K562 (cell line): ENCODE measurements at regions of chr11 and their contacts with region 1.

Region 1: DNA sequence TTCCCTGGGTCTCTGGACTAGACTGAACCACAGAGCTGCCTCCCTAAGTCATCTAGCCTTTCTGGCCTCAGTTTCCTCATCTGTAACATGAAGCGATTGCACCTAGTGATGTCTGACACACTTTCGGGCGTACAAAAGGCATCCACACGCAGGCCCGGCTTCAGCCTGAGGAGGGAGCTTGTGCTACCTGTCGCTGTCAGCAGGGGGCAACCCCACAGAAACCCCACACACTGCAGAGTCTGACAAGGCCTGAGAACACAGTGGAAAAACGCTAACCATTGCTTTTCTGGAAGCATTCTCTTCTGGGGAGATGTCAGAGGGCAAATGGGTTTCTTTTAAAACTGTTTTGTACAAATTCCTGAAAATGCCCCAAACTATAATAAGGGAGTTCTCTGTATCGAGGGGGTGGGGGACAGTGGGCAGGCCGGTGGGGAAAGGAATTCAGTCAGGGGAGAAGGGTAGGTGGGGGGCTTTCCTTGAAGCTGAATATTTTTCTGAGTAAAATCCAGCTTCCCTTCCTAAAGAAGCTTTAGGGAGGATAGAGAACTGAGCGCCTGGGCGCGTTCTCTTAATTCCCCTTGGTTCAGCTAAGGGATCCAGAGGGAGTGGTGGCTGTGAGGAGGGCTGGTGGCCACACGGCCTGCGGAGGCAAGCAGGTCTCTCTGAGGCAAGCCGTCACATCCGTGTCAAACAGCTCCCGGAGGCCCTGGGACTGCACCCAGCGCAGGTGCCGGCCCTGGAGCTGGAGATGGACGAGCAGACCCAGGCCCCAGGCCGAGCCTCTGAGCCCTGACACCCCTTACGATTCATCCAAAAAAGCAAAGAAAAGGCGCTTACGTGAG is 533 bp downstream of the ELF5 start:
- DNase-seq: peak; percentile 73 to 79 (median 77)
- ATAC-seq: peak; percentile 99
- H3K4me3 ChIP-seq: no peak overlapping the region
- H3K27ac ChIP-seq: no peak overlapping the region
- H3K4me1 ChIP-seq: peaks cover 0 to 3% of the 10 kb centered on the region in 2 experiments; a peak in 1 of 5 replicates
- H3K27me3 ChIP-seq: peaks cover 0 to 3% of the 10 kb centered on the region in 2 experiments; a peak in 1 of 5 replicates
- CTCF ChIP-seq: peak; percentile 85 to 95 (median 93)
- EP300 ChIP-seq: no peak
- POLR2A ChIP-seq: no peak
- RAD21 ChIP-seq: peak; percentile 63 to 74

Region 2: GRCh38 chr11:34899633-34900016 is 386.6 kb after region 1 on chr11:
- CTCF ChIA-PET with region 1: interaction called, 3 read pairs
- POLR2A ChIA-PET with region 1: no interaction called
- in situ Hi-C with region 1: loop called (anchors 5 kb)
- intact Hi-C with region 1: loop called (anchors 2 kb)
- DNase-seq: no peak
- ATAC-seq: peak; percentile 16; the same call in 2 of the 3 replicates
- H3K4me3 ChIP-seq: no peak overlapping the region
- H3K27ac ChIP-seq: no peak overlapping the region
- H3K4me1 ChIP-seq: no peaks in the 10 kb centered on the region; a peak in 1 of 5 replicates
- H3K27me3 ChIP-seq: no peaks in the 10 kb centered on the region
- CTCF ChIP-seq: no peak
- EP300 ChIP-seq: no peak
- POLR2A ChIP-seq: no peak
- RAD21 ChIP-seq: no peak